ENCODE measurements at regions of chr21 and their contacts with region 1.

Region 1: DNA sequence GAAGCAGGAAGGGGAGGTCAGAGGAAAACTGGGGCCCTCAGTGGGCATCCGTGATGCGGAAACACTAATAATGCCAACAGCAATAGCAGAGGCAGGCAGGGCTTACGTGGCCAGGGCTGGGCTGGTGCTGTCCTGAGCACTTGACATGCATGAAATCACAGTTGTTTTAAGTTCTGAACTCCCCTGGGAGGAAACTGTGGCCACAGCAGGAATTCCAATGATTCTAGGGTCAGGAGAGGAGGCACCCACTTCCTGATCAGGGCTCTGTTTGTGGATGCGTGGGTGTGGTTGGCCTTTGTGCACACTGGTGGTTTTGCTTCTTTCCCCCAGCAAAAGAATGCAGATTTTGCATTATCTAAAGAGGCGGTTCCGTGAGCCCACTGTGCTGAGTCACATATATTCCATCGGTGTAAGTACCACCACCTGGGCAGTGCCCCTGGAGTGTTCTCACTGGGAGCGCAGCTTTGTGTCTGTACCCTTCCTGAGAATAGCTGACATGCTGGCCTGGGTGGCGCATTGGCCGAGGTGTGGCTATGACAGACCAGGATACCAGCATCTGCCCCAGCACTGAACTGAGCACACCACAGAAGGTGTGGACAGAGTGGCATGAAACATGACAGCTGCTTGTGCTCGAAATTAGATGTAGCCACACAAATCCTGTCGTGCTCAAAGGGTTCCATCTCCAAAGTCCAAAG is 71.0 kb downstream of the PDE9A start:
- DNase-seq: no peak
- H3K4me3 ChIP-seq: no peak overlapping the region
- H3K27ac ChIP-seq: peak overlapping the region; percentile 84
- H3K4me1 ChIP-seq: peaks cover 45% of the 10 kb centered on the region
- H3K27me3 ChIP-seq: no peaks in the 10 kb centered on the region
- CTCF ChIP-seq: no peak

Region 2: DNA sequence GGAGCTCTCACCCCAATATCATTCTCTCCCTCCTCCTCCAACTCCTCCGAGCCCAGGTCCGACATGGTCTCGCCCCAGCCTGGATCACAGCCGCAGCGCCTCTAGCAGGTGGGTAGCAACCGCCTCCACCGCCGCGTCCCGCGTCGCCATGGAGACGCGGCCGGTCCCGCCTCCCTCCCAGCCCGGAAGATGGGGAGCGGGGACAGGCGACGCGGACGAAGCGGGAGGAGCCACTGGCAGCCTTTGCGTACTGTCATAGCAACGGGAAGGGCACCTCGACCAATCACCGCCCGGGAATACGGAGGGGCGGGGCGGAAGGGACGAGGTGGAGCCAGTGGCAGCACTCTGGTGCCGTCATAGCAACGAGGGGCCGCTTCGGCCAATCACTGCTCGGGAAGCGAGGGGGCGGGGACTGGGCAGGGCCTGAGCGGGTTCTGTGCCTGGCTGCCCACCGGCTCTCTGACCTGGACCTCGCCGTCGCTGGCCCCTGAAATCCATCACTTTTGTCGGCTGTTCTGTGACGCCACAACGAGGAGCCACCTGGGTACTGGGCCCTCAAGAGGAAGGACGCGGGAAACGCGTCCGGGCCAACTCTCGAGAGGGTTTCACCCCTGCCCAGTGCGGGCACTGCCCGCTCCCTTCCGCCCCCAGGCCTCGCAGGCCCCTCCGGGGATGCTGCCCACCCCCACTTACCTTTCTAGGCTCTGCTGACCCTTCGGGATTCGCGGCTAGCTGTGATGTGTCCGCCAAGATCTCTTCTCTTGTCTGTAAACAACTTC is 228.1 kb before region 1 on chr21 and contains the start of gene RSPH1:
- intact Hi-C with region 1: no loop called
- DNase-seq: peak; percentile 100
- H3K4me3 ChIP-seq: peak within 1 kb of the TSS; percentile 86
- H3K27ac ChIP-seq: peak within 1 kb of the TSS; percentile 69
- H3K4me1 ChIP-seq: peaks cover 15% of the 10 kb centered on the region
- H3K27me3 ChIP-seq: no peaks in the 10 kb centered on the region
- CTCF ChIP-seq: no peak
- total RNA-seq, gene RSPH1: not detected

Region 3: GRCh38 chr21:42806509-42807140 is 82.3 kb after region 1 on chr21:
- intact Hi-C with region 1: loop called (anchors 10 kb)
- DNase-seq: no peak
- H3K4me3 ChIP-seq: no peak overlapping the region
- H3K27ac ChIP-seq: peak overlapping the region; percentile 27
- H3K4me1 ChIP-seq: peaks cover 12% of the 10 kb centered on the region
- H3K27me3 ChIP-seq: peaks cover 47% of the 10 kb centered on the region
- CTCF ChIP-seq: no peak